ENCODE measurements at regions of chr13 and their contacts with region 1.

Region 1: GRCh38 chr13:102913914-102914313 is 68.1 kb downstream of the ERCC5 start:
- DNase-seq: no peak
- H3K4me3 ChIP-seq: no peak overlapping the region
- H3K27ac ChIP-seq: no peak overlapping the region
- H3K4me1 ChIP-seq: no peaks in the 10 kb centered on the region
- H3K27me3 ChIP-seq: no peaks in the 10 kb centered on the region
- CTCF ChIP-seq: no peak
- EP300 ChIP-seq: no peak
- POLR2A ChIP-seq: no peak
- RAD21 ChIP-seq: no peak

Region 2: GRCh38 chr13:102870677-102871415 is 43.1 kb before region 1 on chr13:
- CTCF ChIA-PET with region 1: interaction called, 12 read pairs
- POLR2A ChIA-PET with region 1: no interaction called
- DNase-seq: peak; percentile 33 to 59
- H3K4me3 ChIP-seq: no peak overlapping the region
- H3K27ac ChIP-seq: no peak overlapping the region
- H3K4me1 ChIP-seq: peaks cover 0 to 5% (median 1%) of the 10 kb centered on the region in 4 experiments; a peak in 3 of 7 replicates
- H3K27me3 ChIP-seq: no peaks in the 10 kb centered on the region
- CTCF ChIP-seq: peak; percentile 63 to 71 (median 67)
- EP300 ChIP-seq: no peak
- POLR2A ChIP-seq: no peak
- RAD21 ChIP-seq: peak; percentile 86 to 90

Region 3: DNA sequence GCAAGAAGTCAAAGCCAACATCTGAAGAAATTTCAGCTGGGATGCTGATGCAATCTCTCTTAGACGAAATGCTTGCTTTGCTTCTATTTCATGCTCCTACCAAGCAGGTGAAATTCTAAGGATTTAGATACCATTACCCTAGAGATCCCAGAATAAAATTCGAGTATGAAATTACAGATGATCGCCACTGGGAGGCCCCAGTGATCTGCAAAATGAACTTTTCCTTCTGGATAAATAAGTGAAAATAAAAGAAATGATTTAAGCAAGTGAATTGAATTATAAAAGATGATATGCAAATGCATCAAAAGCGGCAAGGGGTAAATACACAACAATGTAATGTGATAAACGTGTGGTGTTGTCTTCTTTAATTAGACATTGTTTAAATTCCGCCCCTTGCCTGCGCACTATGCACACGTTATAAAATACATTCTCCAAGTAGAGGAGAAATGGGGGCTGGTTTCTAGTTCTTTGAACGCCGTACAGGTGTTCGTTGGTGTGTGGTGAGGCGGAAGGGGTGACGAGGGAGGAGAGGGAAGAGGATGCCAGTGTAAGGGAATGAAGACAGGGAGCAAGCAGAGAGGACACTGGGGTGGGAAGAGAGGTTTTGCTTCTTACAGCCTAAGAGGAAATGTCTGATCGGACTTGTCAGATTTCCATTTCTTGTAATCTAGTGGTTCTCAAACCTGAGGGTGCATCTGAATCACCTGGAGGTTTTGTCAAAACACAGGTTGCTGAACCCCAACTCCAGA is 10.1 kb before region 1 on chr13:
- CTCF ChIA-PET with region 1: interaction called, 30 read pairs
- POLR2A ChIA-PET with region 1: no interaction called
- DNase-seq: no peak
- H3K4me3 ChIP-seq: no peak overlapping the region
- H3K27ac ChIP-seq: no peak overlapping the region
- H3K4me1 ChIP-seq: peaks cover 0 to 4% (median 0%) of the 10 kb centered on the region in 4 experiments; a peak in 1 of 7 replicates
- H3K27me3 ChIP-seq: no peaks in the 10 kb centered on the region
- CTCF ChIP-seq: peak in 2 of 3 experiments; percentile 25 to 46; a peak in 2 of 4 replicates
- EP300 ChIP-seq: no peak
- POLR2A ChIP-seq: no peak
- RAD21 ChIP-seq: peak; percentile 68

Region 4: GRCh38 chr13:102928941-102929675 is 15.2 kb after region 1 on chr13:
- CTCF ChIA-PET with region 1: interaction called, 15 read pairs
- POLR2A ChIA-PET with region 1: no interaction called
- DNase-seq: no peak
- H3K4me3 ChIP-seq: no peak overlapping the region
- H3K27ac ChIP-seq: no peak overlapping the region
- H3K4me1 ChIP-seq: no peaks in the 10 kb centered on the region
- H3K27me3 ChIP-seq: no peaks in the 10 kb centered on the region
- CTCF ChIP-seq: no peak
- EP300 ChIP-seq: no peak
- POLR2A ChIP-seq: no peak
- RAD21 ChIP-seq: no peak

Region 5: GRCh38 chr13:103067751-103068555 is 154.0 kb after region 1 on chr13:
- CTCF ChIA-PET with region 1: interaction called, 13 read pairs
- POLR2A ChIA-PET with region 1: no interaction called
- DNase-seq: peak; percentile 57 to 64
- H3K4me3 ChIP-seq: no peak overlapping the region
- H3K27ac ChIP-seq: no peak overlapping the region
- H3K4me1 ChIP-seq: peaks cover 5 to 24% (median 12%) of the 10 kb centered on the region in 4 experiments
- H3K27me3 ChIP-seq: no peaks in the 10 kb centered on the region
- CTCF ChIP-seq: peak; percentile 67 to 81 (median 68)
- EP300 ChIP-seq: no peak
- POLR2A ChIP-seq: no peak
- RAD21 ChIP-seq: peak; percentile 84 to 87

Region 6: GRCh38 chr13:103140001-103140671 is 226.2 kb after region 1 on chr13:
- CTCF ChIA-PET with region 1: interaction called, 39 read pairs
- POLR2A ChIA-PET with region 1: no interaction called
- DNase-seq: no peak
- H3K4me3 ChIP-seq: no peak overlapping the region
- H3K27ac ChIP-seq: no peak overlapping the region
- H3K4me1 ChIP-seq: no peaks in the 10 kb centered on the region
- H3K27me3 ChIP-seq: no peaks in the 10 kb centered on the region
- CTCF ChIP-seq: peak in 2 of 3 experiments; percentile 69 to 83; a peak in 3 of 4 replicates
- EP300 ChIP-seq: no peak
- POLR2A ChIP-seq: no peak
- RAD21 ChIP-seq: peak; percentile 90 to 91

Region 7: DNA sequence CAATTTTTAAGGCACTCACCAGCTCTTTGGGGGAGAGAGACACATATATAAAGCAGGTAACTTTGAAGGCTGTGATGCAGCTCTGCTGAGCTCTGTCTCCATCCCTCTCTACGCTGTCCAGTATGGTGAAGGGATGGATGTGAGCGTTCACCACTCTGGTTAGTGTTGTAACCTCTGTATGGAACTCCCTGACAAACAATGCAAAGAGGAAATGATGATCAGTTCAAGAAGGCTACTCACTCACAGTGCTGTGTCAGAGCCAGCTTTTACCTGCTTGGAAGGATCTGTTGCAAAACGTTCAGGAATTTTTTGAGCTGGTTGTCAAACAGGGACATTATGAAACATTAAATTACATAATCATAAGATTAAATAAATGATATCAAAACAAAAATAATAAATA is 243.1 kb after region 1 on chr13:
- CTCF ChIA-PET with region 1: interaction called, 11 read pairs
- POLR2A ChIA-PET with region 1: no interaction called
- DNase-seq: no peak
- H3K4me3 ChIP-seq: no peak overlapping the region
- H3K27ac ChIP-seq: no peak overlapping the region
- H3K4me1 ChIP-seq: peaks cover 0 to 3% (median 0%) of the 10 kb centered on the region in 4 experiments; a peak in 1 of 7 replicates
- H3K27me3 ChIP-seq: no peaks in the 10 kb centered on the region; a peak in 1 of 7 replicates
- CTCF ChIP-seq: no peak
- EP300 ChIP-seq: no peak
- POLR2A ChIP-seq: no peak
- RAD21 ChIP-seq: no peak